Right ventricle myocardium superior (tissue), 1 donor: ENCODE measurements at regions of chr9 and their contacts with region 1.

Region 1: GRCh38 chr9:33415501-33416038 is 13.2 kb upstream of the AQP7 start:
- DNase-seq: peak; percentile 89
- ATAC-seq: peak; percentile 84

Region 2: GRCh38 chr9:33374634-33375213 is 40.8 kb before region 1 on chr9:
- intact Hi-C with region 1: loop called (anchors 2 kb)
- DNase-seq: peak; percentile 67
- ATAC-seq: peak; percentile 84

Region 3: DNA sequence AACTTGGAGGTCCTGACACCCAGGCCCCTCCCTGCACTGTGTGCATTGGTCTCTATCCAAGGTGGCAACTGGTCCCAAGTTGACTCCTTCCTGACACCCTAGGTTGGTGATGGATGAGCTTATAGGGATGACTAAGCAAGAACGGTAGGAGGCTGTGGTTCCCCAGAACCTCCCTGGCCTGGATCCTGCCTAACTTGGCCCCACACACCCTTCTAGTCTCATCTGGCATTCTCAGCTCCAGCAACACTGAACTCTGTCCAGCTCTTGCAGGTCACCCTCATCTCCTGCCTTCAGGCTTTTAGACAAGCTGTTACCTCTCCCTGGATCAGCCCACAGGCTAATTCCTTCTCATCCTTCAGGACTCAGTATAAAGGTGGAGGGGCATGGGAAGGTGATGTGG is 15.4 kb after region 1 on chr9:
- intact Hi-C with region 1: no loop called
- DNase-seq: no peak
- ATAC-seq: no peak